ENCODE measurements at regions of chr1 and their contacts with region 1.

Region 1: DNA sequence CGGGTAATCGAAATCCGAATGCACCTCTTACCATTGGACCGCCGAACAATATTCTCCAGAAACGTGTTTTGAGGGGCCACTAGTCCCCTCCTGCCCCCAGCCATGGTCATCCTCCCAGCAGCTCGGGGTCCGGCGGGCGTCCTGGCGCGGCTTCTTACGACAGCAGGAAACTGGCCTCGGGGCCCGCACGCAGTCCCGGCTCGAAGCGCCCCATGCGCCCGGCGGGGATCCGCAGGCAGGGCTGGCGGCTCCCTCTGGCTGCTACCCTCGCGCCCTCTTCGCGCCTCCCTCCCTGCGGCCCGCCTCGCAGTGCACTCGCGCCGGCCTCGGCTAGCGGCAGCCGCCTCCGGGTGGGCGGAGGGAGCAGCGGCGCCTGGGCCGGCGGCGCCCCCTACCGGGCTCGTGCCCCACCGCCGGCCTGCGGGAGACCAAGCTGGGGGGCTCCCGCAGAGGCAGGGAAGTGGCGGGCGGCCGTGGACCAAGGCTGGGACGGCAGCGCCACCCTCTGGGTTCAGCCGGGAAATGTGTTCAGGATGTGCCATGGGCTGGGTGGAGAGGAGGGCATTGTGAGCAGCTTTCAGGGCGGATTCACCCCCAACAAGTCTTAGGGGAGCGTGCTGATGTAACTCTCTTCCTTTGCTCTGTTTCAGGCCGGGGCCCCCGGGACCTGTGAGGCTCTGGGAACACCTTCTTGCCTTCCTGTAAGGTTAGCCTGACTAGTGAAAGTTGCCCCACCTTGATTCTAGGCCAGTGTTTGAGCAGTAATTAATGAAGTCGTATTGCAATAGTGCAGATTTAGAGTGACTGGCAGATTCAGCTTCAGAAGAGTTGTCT is at the start of gene KCNH1:
- DNase-seq: peak; percentile 95

Region 2: DNA sequence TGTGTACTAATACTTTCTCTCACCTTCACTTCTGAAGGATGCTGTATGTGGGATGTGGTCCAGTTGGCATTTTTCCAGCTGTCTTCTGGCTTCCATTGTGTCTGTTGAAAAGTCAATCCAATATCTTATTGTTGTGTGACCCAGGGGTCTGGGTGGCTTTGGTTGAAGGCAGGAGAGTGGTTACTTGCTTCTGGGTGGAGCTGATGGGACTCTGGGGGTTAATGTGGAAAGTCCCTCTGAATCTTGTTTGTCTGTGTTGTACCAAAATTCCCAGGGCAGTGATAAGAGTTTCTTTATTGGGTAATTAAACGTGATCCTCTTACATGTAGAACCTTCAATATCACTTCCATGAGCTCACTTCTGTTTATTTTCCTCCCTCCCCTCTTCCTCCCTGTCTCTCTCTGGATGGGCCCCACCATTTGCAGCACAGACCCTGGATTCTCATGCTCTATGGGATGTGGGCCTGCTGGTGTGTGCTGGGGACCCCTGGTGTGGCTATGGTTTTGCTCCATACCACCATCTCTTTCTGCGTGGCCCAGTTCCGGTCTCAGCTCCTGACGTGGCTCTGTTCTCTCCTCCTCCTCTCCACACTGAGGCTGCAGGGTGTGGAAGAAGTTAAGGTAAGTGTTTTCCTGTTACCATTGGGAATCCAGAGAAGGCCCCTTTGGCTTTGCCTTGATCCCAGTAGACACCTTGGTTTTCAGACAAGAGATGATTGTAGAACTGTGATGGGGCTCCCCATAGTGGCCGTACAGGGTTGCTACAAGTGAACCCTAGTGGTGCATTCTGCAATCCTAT is 733.8 kb before region 1 on chr1:
- in situ Hi-C with region 1: loop called (anchors 25 kb)
- DNase-seq: peak; percentile 79

Region 3: GRCh38 chr1:210584439-210585113 is 549.5 kb before region 1 on chr1:
- in situ Hi-C with region 1: loop called (anchors 25 kb)
- DNase-seq: peak; percentile 89

Region 4: DNA sequence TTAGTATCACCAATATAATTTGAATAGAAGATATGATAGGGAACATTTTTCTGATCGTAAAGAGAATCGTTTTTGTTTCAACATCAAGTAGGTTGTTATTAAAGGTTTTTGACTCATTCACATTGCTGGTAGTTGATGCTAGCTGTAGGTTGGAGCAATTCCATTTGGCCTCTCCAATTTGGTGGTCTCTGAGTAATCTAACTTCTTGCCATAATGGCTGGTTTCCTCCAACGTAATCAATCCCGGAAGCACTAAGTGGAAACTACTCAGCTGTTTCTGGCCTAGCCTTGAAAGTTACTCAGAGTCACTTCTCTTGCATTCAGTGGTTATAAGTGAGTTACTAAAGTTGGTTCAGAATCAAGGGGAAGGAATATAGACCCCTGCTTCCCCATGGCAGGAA is 151.1 kb after region 1 on chr1:
- in situ Hi-C with region 1: no loop called
- DNase-seq: no peak